ENCODE measurements at regions of chr16 and their contacts with region 1.

Region 1: GRCh38 chr16:67480833-67481560 is at the start of gene ATP6V0D1:
- DNase-seq: peak; percentile 100
- ATAC-seq: peak; percentile 85
- H3K4me3 ChIP-seq: peak within 1 kb of the TSS; percentile 67 to 100 (median 99)
- H3K4me3 Mint-ChIP-seq: peak within 1 kb of the TSS; percentile 99
- H3K27ac ChIP-seq: peak within 1 kb of the TSS; percentile 99 to 100
- H3K27ac Mint-ChIP-seq: peak within 1 kb of the TSS; percentile 98
- H3K4me1 ChIP-seq: peaks cover 38 to 52% of the 10 kb centered on the region in 2 donors
- H3K4me1 Mint-ChIP-seq: peaks cover 63% of the 10 kb centered on the region
- H3K27me3 ChIP-seq: no peaks in the 10 kb centered on the region
- H3K27me3 Mint-ChIP-seq: no peaks in the 10 kb centered on the region
- CTCF ChIP-seq: peak; percentile 79
- total RNA-seq, gene ATP6V0D1: 59.7 and 62.1 TPM in 2 replicates

Region 2: GRCh38 chr16:67246934-67247697 is 233.9 kb before region 1 on chr16 and contains the start of gene FHOD1:
- CTCF ChIA-PET with region 1: interaction called, 4 read pairs
- POLR2A ChIA-PET with region 1: no interaction called
- intact Hi-C with region 1: loop called (anchors 2 kb)
- DNase-seq: peak; percentile 96
- ATAC-seq: peak; percentile 75
- H3K4me3 ChIP-seq: peak within 1 kb of the TSS; percentile 70 to 97 (median 79)
- H3K4me3 Mint-ChIP-seq: peak within 1 kb of the TSS; percentile 96
- H3K27ac ChIP-seq: peak within 1 kb of the TSS; percentile 16 to 48
- H3K27ac Mint-ChIP-seq: peak within 1 kb of the TSS; percentile 90
- H3K4me1 ChIP-seq: peaks cover 46 to 55% of the 10 kb centered on the region in 2 donors
- H3K4me1 Mint-ChIP-seq: peaks cover 53% of the 10 kb centered on the region
- H3K27me3 ChIP-seq: peaks cover 0 to 17% (median 12%) of the 10 kb centered on the region in 4 experiments
- H3K27me3 Mint-ChIP-seq: peaks cover 9% of the 10 kb centered on the region
- CTCF ChIP-seq: no peak
- total RNA-seq, gene FHOD1: 46.9 and 47.3 TPM in 2 replicates

Region 3: DNA sequence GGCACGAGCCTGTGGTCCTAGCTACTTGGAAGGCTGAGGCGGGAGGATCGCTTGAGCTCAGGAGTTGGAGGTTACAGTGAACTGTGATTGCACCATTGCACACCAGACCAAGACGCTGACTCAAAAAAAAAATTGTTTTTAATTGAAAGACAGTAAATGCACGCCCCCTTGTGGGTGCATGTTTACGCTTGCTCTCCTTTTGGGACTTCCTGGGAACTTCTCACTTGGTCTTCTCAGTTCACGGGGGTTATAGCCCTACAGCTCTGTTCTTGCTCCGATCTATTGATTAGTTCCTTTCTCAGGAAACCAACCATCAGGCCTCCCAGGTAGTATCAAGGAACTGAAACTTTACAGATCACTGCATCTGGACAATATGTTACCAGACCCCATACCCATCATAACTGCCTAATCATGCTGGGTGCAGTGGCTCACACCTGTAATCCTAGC is 33.4 kb after region 1 on chr16:
- CTCF ChIA-PET with region 1: interaction called, 817 read pairs
- POLR2A ChIA-PET with region 1: interaction called, 19 read pairs
- intact Hi-C with region 1: loop called (anchors 1 kb)
- DNase-seq: peak; percentile 89
- ATAC-seq: peak; percentile 14
- H3K4me3 ChIP-seq: no peak overlapping the region
- H3K4me3 Mint-ChIP-seq: peak overlapping the region; percentile 66
- H3K27ac ChIP-seq: peak overlapping the region; percentile 59 to 67
- H3K27ac Mint-ChIP-seq: peak overlapping the region; percentile 96
- H3K4me1 ChIP-seq: peaks cover 64 to 76% of the 10 kb centered on the region in 2 donors
- H3K4me1 Mint-ChIP-seq: peaks cover 64% of the 10 kb centered on the region
- H3K27me3 ChIP-seq: no peaks in the 10 kb centered on the region
- H3K27me3 Mint-ChIP-seq: no peaks in the 10 kb centered on the region
- CTCF ChIP-seq: peak; percentile 68

Region 4: DNA sequence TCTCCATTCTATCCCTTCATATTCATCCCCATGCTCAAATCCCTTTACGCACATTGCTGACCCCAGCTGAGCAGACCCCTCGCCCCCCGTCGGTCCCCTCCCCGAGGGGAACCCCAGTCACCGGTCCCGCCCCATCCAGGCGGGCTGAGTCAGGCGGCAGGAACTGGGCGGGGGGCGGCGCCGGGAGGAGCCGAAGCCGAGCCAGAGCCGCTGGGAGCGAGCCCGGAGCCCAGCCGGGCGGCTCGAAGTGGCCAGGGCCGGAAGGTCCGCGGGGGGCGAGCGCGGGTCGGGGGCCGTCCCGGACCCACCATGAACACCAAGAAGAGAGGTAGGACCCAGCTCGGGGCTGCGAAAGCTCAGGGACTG is 56.3 kb after region 1 on chr16:
- CTCF ChIA-PET with region 1: interaction called, 30 read pairs
- POLR2A ChIA-PET with region 1: interaction called, 7 read pairs
- intact Hi-C with region 1: no loop called
- DNase-seq: peak; percentile 71
- ATAC-seq: peak; percentile 44
- H3K4me3 ChIP-seq: peak overlapping the region; percentile 4 to 78 (median 69)
- H3K4me3 Mint-ChIP-seq: peak overlapping the region; percentile 91
- H3K27ac ChIP-seq: peak overlapping the region; percentile 91 to 97
- H3K27ac Mint-ChIP-seq: peak overlapping the region; percentile 95
- H3K4me1 ChIP-seq: peaks cover 63 to 79% of the 10 kb centered on the region in 2 donors
- H3K4me1 Mint-ChIP-seq: peaks cover 76% of the 10 kb centered on the region
- H3K27me3 ChIP-seq: no peaks in the 10 kb centered on the region
- H3K27me3 Mint-ChIP-seq: no peaks in the 10 kb centered on the region
- CTCF ChIP-seq: no peak

Region 5: GRCh38 chr16:67641779-67642708 is 161.0 kb after region 1 on chr16:
- CTCF ChIA-PET with region 1: interaction called, 30 read pairs
- POLR2A ChIA-PET with region 1: interaction called, 9 read pairs
- intact Hi-C with region 1: no loop called
- DNase-seq: no peak
- ATAC-seq: no peak
- H3K4me3 ChIP-seq: no peak overlapping the region
- H3K4me3 Mint-ChIP-seq: no peak overlapping the region
- H3K27ac ChIP-seq: no peak overlapping the region
- H3K27ac Mint-ChIP-seq: no peak overlapping the region
- H3K4me1 ChIP-seq: peaks cover 12 to 20% of the 10 kb centered on the region in 2 donors
- H3K4me1 Mint-ChIP-seq: peaks cover 16% of the 10 kb centered on the region
- H3K27me3 ChIP-seq: no peaks in the 10 kb centered on the region
- H3K27me3 Mint-ChIP-seq: no peaks in the 10 kb centered on the region
- CTCF ChIP-seq: no peak

Region 6: GRCh38 chr16:67806428-67807147 is 325.6 kb after region 1 on chr16 and contains the starts of genes RANBP10 and TSNAXIP1:
- CTCF ChIA-PET with region 1: no interaction called
- POLR2A ChIA-PET with region 1: no interaction called
- intact Hi-C with region 1: loop called (anchors 10 kb)
- DNase-seq: peak; percentile 98
- ATAC-seq: peak; percentile 89
- H3K4me3 ChIP-seq: peak within 1 kb of the TSS; percentile 89 to 99 (median 92)
- H3K4me3 Mint-ChIP-seq: peak within 1 kb of the TSS; percentile 97
- H3K27ac ChIP-seq: peak within 1 kb of the TSS; percentile 78 to 80
- H3K27ac Mint-ChIP-seq: peak within 1 kb of the TSS; percentile 94
- H3K4me1 ChIP-seq: peaks cover 40 to 51% of the 10 kb centered on the region in 2 donors
- H3K4me1 Mint-ChIP-seq: peaks cover 45% of the 10 kb centered on the region
- H3K27me3 ChIP-seq: no peaks in the 10 kb centered on the region
- H3K27me3 Mint-ChIP-seq: no peaks in the 10 kb centered on the region
- CTCF ChIP-seq: no peak
- total RNA-seq, gene RANBP10: 32.2 and 33.1 TPM in 2 replicates
- total RNA-seq, gene TSNAXIP1: 1.1 and 1.2 TPM in 2 replicates

Measured in B cell (primary cell).